CD14-positive monocyte (primary cell): ENCODE measurements at regions of chr17 and their contacts with region 1.

Region 1: DNA sequence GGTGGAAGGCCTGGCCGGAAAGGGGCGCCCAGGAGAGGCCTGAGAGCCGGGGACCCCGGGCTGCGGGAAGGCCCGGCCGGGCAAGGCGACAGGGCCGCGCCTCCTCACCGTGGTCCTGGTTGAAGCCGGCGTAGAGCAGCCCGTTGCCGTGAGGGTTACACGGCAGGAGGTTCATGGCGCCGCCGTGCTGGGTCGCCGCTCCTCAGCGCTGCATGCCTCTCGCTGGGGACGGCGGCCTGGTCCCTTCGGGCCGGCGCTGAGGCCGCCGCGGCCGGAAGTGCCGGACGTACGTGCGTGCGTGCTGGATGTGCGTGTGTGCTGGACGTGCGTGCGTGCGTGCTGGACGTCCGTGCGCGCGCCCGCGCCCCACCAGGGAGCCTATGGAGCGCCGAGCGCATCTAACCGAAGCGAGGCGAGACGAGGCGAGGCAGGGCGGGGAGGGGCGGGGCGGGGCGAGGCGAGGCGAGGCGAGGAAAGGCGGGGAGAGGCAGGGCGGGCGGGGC is at the start of gene WDR45B:
- DNase-seq: peak; percentile 93 to 99 (median 98)
- H3K4me3 ChIP-seq: peak within 1 kb of the TSS; percentile 76 to 80 (median 77)
- H3K4me3 Mint-ChIP-seq: peak within 1 kb of the TSS; percentile 83 to 87
- H3K27ac ChIP-seq: peak within 1 kb of the TSS; percentile 75 to 93
- H3K27ac Mint-ChIP-seq: peak within 1 kb of the TSS; percentile 65 to 90 (median 87)
- H3K4me1 ChIP-seq: peaks cover 17 to 18% of the 10 kb centered on the region in 2 donors
- H3K4me1 Mint-ChIP-seq: peaks cover 18% of the 10 kb centered on the region
- H3K27me3 ChIP-seq: no peaks in the 10 kb centered on the region
- H3K27me3 Mint-ChIP-seq: peaks cover 0 to 2% (median 0%) of the 10 kb centered on the region in 3 donors
- CTCF ChIP-seq: no peak
- polyA plus RNA-seq, gene WDR45B: 42.6 to 82.6 (median 60.3) TPM

Region 2: GRCh38 chr17:82450170-82451106 is 197.8 kb before region 1 on chr17 and contains the start of gene CYBC1:
- intact Hi-C with region 1: loop called in 1 of 2 experiments (anchors 2 kb)
- DNase-seq: peak; percentile 87 to 93 (median 91)
- H3K4me3 ChIP-seq: peak within 1 kb of the TSS; percentile 78 to 100 (median 79)
- H3K4me3 Mint-ChIP-seq: peak within 1 kb of the TSS; percentile 93 to 99
- H3K27ac ChIP-seq: peak within 1 kb of the TSS; percentile 79 to 87
- H3K27ac Mint-ChIP-seq: peak within 1 kb of the TSS; percentile 80 to 97 (median 93)
- H3K4me1 ChIP-seq: peaks cover 28 to 38% of the 10 kb centered on the region in 2 donors
- H3K4me1 Mint-ChIP-seq: peaks cover 24% of the 10 kb centered on the region
- H3K27me3 ChIP-seq: no peaks in the 10 kb centered on the region
- H3K27me3 Mint-ChIP-seq: peaks cover 0 to 1% (median 0%) of the 10 kb centered on the region in 3 donors
- CTCF ChIP-seq: no peak
- polyA plus RNA-seq, gene CYBC1: 160 to 225 (median 217) TPM

Region 3: GRCh38 chr17:82698065-82698973 is 50.1 kb after region 1 on chr17 and contains the start of gene RAB40B:
- intact Hi-C with region 1: loop called (anchors 2 to 5 kb)
- DNase-seq: peak; percentile 98
- H3K4me3 ChIP-seq: peak within 1 kb of the TSS; percentile 32 to 73 (median 48)
- H3K4me3 Mint-ChIP-seq: peak within 1 kb of the TSS; percentile 75 to 92
- H3K27ac ChIP-seq: no peak within 1 kb of the TSS
- H3K27ac Mint-ChIP-seq: peak within 1 kb of the TSS in 3 of 7 donors; percentile 26 to 78 (median 70)
- H3K4me1 ChIP-seq: peaks cover 13 to 20% of the 10 kb centered on the region in 2 donors
- H3K4me1 Mint-ChIP-seq: peaks cover 9% of the 10 kb centered on the region
- H3K27me3 ChIP-seq: peaks cover 9 to 20% of the 10 kb centered on the region in 2 donors
- H3K27me3 Mint-ChIP-seq: peaks cover 23 to 31% (median 28%) of the 10 kb centered on the region in 3 donors
- CTCF ChIP-seq: no peak
- polyA plus RNA-seq, gene RAB40B: 0.75 to 2.2 (median 0.95) TPM

Region 4: DNA sequence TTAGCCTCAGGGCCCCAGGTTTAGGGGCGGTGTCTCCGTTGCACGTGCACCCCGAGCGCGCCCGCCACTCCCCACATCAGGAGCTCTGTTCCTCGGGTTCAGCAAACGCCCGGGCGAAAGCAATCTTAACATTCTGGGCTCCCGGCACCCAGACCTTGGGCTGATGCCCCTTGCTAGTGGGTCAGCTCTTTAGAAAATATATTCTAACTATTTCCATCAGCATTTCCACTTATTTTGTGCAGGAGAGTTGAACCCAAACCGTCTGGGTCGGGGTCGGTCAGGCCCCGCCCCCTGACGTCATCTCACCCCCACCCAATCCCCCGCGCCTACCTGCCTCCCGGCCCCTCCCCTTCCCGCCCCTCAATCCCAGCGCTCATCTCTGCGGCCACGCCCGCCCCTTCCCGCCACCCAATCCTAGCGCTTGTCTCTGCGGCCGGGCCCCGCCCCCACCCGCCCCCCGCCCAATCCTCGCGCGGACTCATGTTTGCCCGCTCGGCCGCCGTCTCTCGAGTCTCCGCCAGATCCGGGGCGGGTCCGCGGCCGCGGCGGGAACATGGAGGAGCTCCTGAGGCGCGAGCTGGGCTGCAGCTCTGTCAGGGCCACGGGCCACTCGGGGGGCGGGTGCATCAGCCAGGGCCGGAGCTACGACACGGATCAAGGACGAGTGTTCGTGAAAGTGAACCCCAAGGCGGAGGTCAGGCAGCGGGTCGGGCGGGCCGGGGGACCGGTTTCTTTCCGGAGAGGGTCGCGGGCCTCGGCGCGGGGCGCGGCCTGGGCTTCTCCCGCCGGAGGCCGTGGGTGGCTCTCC is 68.2 kb after region 1 on chr17 and contains the start of gene FN3KRP:
- intact Hi-C with region 1: loop called in 1 of 2 experiments (anchors 5 kb)
- DNase-seq: peak; percentile 88 to 93 (median 93)
- H3K4me3 ChIP-seq: peak within 1 kb of the TSS; percentile 69 to 88 (median 84)
- H3K4me3 Mint-ChIP-seq: peak within 1 kb of the TSS; percentile 96 to 98
- H3K27ac ChIP-seq: peak within 1 kb of the TSS in 1 of 2 donors; percentile 59
- H3K27ac Mint-ChIP-seq: peak within 1 kb of the TSS; percentile 70 to 92 (median 77)
- H3K4me1 ChIP-seq: peaks cover 17 to 20% of the 10 kb centered on the region in 2 donors
- H3K4me1 Mint-ChIP-seq: peaks cover 20% of the 10 kb centered on the region
- H3K27me3 ChIP-seq: no peaks in the 10 kb centered on the region
- H3K27me3 Mint-ChIP-seq: peaks cover 2 to 10% (median 4%) of the 10 kb centered on the region in 3 donors
- CTCF ChIP-seq: no peak
- polyA plus RNA-seq, gene FN3KRP: 16.5 to 24.8 (median 23.2) TPM

Region 5: GRCh38 chr17:82751571-82752370 is 103.6 kb after region 1 on chr17 and contains the start of gene TBCD:
- intact Hi-C with region 1: loop called (anchors 2 to 5 kb)
- DNase-seq: peak; percentile 60 to 84 (median 70)
- H3K4me3 ChIP-seq: peak within 1 kb of the TSS; percentile 49 to 85 (median 67)
- H3K4me3 Mint-ChIP-seq: peak within 1 kb of the TSS; percentile 83 to 87
- H3K27ac ChIP-seq: peak within 1 kb of the TSS in 1 of 2 donors; percentile 75
- H3K27ac Mint-ChIP-seq: peak within 1 kb of the TSS in 5 of 7 donors; percentile 26 to 81 (median 57)
- H3K4me1 ChIP-seq: peaks cover 10 to 15% of the 10 kb centered on the region in 2 donors
- H3K4me1 Mint-ChIP-seq: peaks cover 25% of the 10 kb centered on the region
- H3K27me3 ChIP-seq: peaks cover 0 to 8% of the 10 kb centered on the region in 2 donors
- H3K27me3 Mint-ChIP-seq: peaks cover 1 to 27% (median 7%) of the 10 kb centered on the region in 3 donors
- CTCF ChIP-seq: no peak
- polyA plus RNA-seq, gene TBCD: 54.7 to 74.0 (median 66.6) TPM